Activated CD8-positive, alpha-beta T cell treated with anti-CD3 and anti-CD28 coated beads for 36 hours (primary cell): ENCODE measurements at regions of chr6 and their contacts with region 1.

Region 1: GRCh38 chr6:151014404-151015100 is 149.1 kb downstream of the MTHFD1L start:
- DNase-seq: peak; percentile 67
- ATAC-seq: peak; percentile 78
- H3K4me3 Mint-ChIP-seq: no peak overlapping the region
- H3K27ac Mint-ChIP-seq: no peak overlapping the region
- H3K4me1 Mint-ChIP-seq: no peaks in the 10 kb centered on the region
- H3K27me3 Mint-ChIP-seq: no peaks in the 10 kb centered on the region
- CTCF ChIP-seq: peak; percentile 98

Region 2: GRCh38 chr6:150692604-150693003 is 321.9 kb before region 1 on chr6:
- CTCF ChIA-PET with region 1: no interaction called
- POLR2A ChIA-PET with region 1: no interaction called
- intact Hi-C with region 1: no loop called
- DNase-seq: no peak
- ATAC-seq: no peak
- H3K4me3 Mint-ChIP-seq: no peak overlapping the region
- H3K27ac Mint-ChIP-seq: no peak overlapping the region
- H3K4me1 Mint-ChIP-seq: no peaks in the 10 kb centered on the region
- H3K27me3 Mint-ChIP-seq: no peaks in the 10 kb centered on the region
- CTCF ChIP-seq: no peak

Region 3: DNA sequence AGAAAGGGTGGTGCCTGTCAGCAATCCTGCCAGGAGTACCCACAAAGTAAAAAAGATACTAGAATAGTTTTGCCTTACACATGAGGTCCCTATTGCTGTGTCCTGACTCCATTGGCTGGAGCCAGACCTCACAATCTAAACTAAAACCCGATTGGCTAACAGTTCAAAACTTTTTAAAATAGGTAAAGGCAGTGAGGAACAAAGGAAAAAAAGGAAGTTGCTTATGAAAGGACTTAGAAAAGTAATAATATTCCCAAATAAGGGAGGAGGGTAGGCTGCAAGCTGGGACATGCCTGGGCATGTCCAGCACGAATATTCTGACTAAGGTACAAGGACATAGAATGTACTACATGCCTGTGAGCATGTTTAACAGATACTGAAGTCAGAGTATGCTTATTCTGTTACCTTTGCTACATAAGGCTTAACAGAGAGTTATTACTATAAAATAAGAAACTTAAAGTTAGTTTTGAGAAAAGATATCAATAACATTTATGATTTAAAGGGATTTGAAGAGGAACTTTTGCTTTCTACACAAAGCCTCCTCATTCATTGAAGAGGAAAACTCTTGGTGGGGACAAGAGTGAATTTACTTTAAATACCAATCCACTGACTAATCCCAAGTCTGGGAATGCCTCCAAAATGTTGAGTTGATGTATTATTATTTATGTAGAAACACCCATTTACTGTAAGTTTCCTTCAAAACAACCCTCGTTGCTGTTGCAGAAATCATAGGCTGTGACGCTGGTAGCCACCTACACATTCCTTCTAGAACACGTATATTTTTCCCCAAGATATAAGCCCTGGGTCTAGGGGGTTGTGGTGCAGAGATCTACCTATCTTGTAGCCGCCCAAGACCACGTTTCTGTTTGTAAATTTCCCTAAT is 157.2 kb before region 1 on chr6:
- CTCF ChIA-PET with region 1: no interaction called
- POLR2A ChIA-PET with region 1: no interaction called
- intact Hi-C with region 1: no loop called
- DNase-seq: no peak
- ATAC-seq: no peak
- H3K4me3 Mint-ChIP-seq: no peak overlapping the region
- H3K27ac Mint-ChIP-seq: no peak overlapping the region
- H3K4me1 Mint-ChIP-seq: peaks cover 9% of the 10 kb centered on the region
- H3K27me3 Mint-ChIP-seq: peaks cover 13% of the 10 kb centered on the region
- CTCF ChIP-seq: no peak

Region 4: GRCh38 chr6:151004415-151005024 is 10.0 kb before region 1 on chr6:
- CTCF ChIA-PET with region 1: interaction called, 27 read pairs
- POLR2A ChIA-PET with region 1: no interaction called
- intact Hi-C with region 1: no loop called
- DNase-seq: no peak
- ATAC-seq: peak; percentile 60
- H3K4me3 Mint-ChIP-seq: no peak overlapping the region
- H3K27ac Mint-ChIP-seq: peak overlapping the region; percentile 7
- H3K4me1 Mint-ChIP-seq: peaks cover 30% of the 10 kb centered on the region
- H3K27me3 Mint-ChIP-seq: no peaks in the 10 kb centered on the region
- CTCF ChIP-seq: no peak

Region 5: GRCh38 chr6:151029970-151030369 is 15.4 kb after region 1 on chr6:
- CTCF ChIA-PET with region 1: interaction called, 18 read pairs
- POLR2A ChIA-PET with region 1: no interaction called
- intact Hi-C with region 1: no loop called
- DNase-seq: no peak
- ATAC-seq: no peak
- H3K4me3 Mint-ChIP-seq: no peak overlapping the region
- H3K27ac Mint-ChIP-seq: no peak overlapping the region
- H3K4me1 Mint-ChIP-seq: peaks cover 11% of the 10 kb centered on the region
- H3K27me3 Mint-ChIP-seq: no peaks in the 10 kb centered on the region
- CTCF ChIP-seq: no peak

Region 6: DNA sequence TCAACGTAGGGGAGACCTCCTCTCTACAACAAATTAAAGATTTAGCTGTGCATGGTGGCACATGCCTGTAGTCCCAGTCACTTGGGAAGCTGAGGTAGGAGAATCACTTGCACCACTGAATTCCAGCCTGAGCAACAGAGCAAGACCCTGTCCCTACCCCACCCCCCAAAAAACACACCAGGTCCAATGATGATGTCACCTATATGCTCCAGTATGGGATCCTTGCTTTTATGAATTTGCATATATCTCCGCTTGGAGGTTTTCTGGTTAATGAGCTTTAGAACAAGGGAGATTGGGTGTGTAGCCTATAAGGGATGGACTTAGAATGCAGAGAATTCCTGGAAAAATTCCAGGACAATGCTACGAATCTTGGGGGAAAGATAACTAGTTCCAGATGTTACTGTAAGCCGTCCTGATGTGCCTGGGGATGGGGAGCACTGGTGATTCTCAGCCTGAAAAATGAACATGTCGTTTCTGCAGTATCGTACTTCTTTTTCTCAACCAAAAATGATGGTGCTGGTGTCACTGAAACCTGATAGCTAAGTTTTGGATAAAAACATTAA is 315.7 kb after region 1 on chr6:
- CTCF ChIA-PET with region 1: interaction called, 179 read pairs
- POLR2A ChIA-PET with region 1: interaction called, 5 read pairs
- intact Hi-C with region 1: no loop called
- DNase-seq: no peak
- ATAC-seq: no peak
- H3K4me3 Mint-ChIP-seq: no peak overlapping the region
- H3K27ac Mint-ChIP-seq: no peak overlapping the region
- H3K4me1 Mint-ChIP-seq: peaks cover 8% of the 10 kb centered on the region
- H3K27me3 Mint-ChIP-seq: peaks cover 25% of the 10 kb centered on the region
- CTCF ChIP-seq: no peak

Region 7: DNA sequence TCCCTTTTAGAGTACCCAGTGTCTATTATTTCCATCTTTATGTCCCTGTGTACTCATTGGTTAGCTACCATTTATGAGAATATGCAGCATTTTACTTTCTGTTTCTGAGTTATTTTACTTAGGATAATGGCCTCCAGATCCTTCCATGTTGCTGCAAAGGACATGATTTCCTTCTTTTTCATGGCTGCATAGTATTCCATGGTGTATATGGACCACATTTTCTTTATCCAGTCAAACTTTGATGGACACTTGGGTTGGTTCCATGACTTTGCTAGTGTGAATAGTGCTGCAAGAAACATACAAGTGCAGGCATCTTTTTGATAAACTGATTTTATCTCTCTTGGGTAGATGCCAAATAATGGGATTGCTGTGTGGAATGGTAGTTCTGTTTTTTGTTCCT is 321.4 kb after region 1 on chr6:
- CTCF ChIA-PET with region 1: interaction called, 25 read pairs
- POLR2A ChIA-PET with region 1: no interaction called
- intact Hi-C with region 1: no loop called
- DNase-seq: no peak
- ATAC-seq: no peak
- H3K4me3 Mint-ChIP-seq: no peak overlapping the region
- H3K27ac Mint-ChIP-seq: no peak overlapping the region
- H3K4me1 Mint-ChIP-seq: no peaks in the 10 kb centered on the region
- H3K27me3 Mint-ChIP-seq: peaks cover 2% of the 10 kb centered on the region
- CTCF ChIP-seq: no peak